CD4-positive, alpha-beta memory T cell (primary cell): ENCODE measurements at regions of chr17 and their contacts with region 1.

Region 1: DNA sequence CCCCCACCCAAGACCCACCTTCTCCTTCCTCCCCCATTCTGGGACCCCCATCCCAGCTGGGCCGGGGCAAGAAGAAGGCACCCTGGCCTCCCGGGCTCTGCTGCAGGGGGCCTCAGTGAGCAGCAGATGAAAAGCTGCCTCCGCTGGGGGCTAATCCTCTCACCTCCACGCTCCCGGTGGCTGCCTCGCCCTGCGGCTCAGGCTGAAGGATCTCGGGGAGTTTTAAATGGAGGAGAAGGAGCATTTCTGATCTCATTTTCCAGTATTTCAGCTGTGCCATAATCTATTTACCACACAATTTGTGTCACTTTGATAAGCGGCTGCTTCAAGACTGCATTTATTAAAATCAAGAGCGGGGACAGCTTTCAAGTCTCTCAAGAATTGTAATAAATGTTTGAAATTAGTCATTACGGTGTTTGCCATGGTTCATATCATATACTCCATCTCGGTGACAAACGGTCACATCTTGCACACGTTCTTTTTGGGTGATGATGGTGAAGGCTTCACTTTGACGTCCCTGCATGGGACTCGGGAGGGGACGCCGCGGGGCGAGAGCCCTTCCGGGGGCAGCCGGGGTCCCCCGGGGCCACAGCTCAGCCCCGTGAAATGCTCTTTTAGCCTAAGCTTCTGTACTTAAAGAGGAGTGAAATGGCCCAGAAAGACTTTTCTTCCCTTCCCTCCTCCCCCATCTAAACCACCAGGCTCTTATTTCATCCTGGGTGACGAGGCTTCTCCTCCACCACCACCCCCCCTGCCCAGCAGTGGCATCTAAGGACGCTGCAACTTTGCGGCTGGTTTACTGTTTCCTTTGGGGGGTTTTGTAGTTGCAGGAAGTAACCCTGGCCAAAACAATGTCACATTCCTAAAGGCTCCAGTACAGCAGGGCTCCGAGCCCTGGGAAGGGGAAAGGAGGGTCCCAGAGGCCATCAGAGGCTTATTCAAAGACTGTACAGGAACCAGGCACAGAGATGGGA is 313.1 kb upstream of the TNRC6C start:
- DNase-seq: peak; percentile 52 to 81 (median 60)
- H3K4me3 ChIP-seq: peak overlapping the region; percentile 55 to 57
- H3K4me3 Mint-ChIP-seq: peak overlapping the region; percentile 80 to 95 (median 86)
- H3K27ac ChIP-seq: peak overlapping the region; percentile 16
- H3K27ac Mint-ChIP-seq: peak overlapping the region; percentile 77 to 94 (median 88)
- H3K4me1 ChIP-seq: peaks cover 20% of the 10 kb centered on the region
- H3K4me1 Mint-ChIP-seq: peaks cover 9 to 30% (median 22%) of the 10 kb centered on the region in 4 donors
- H3K27me3 ChIP-seq: no peaks in the 10 kb centered on the region
- H3K27me3 Mint-ChIP-seq: no peaks in the 10 kb centered on the region

Region 2: DNA sequence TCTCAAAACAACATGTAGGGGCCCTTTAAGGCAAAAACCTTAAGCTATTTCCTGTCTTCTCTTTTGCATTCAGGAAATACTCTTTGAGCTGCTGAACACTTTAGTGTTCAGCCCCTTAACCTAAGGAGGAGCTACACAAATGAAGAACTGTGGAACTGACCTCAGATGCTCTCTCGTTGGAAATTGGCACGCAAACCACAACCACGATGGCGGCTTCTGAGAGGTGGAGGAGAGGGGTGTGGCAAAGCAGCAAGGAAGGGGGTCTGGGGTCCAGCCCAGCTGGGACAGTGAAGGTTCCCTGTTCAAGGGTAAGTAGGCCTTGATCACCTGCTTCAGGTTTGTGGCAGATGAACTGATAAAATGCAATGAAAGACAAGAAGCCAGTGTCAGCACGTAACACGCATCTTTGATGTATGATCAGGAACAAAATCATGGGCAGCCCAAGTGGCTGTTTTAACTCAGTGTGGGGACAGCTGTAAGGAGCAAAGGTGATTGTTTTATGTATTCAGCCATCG is 21.6 kb after region 1 on chr17:
- CTCF ChIA-PET with region 1: interaction called, 7 read pairs
- POLR2A ChIA-PET with region 1: interaction called, 33 read pairs
- intact Hi-C with region 1: loop called (anchors 1 kb)
- DNase-seq: peak; percentile 83 to 89 (median 84)
- H3K4me3 ChIP-seq: peak overlapping the region; percentile 49 to 53
- H3K4me3 Mint-ChIP-seq: peak overlapping the region; percentile 81 to 98 (median 90)
- H3K27ac ChIP-seq: peak overlapping the region; percentile 54
- H3K27ac Mint-ChIP-seq: peak overlapping the region; percentile 82 to 98 (median 97)
- H3K4me1 ChIP-seq: peaks cover 35% of the 10 kb centered on the region
- H3K4me1 Mint-ChIP-seq: peaks cover 44 to 64% (median 50%) of the 10 kb centered on the region in 4 donors
- H3K27me3 ChIP-seq: no peaks in the 10 kb centered on the region
- H3K27me3 Mint-ChIP-seq: no peaks in the 10 kb centered on the region

Region 3: GRCh38 chr17:77690271-77691161 is 45.2 kb after region 1 on chr17:
- CTCF ChIA-PET with region 1: interaction called, 5 read pairs
- POLR2A ChIA-PET with region 1: no interaction called
- intact Hi-C with region 1: loop called (anchors 10 kb)
- DNase-seq: peak in 3 of 5 donors; percentile 16 to 18 (median 18)
- H3K4me3 ChIP-seq: peak overlapping the region in 1 of 2 donors; percentile 24
- H3K4me3 Mint-ChIP-seq: peak overlapping the region; percentile 48 to 78 (median 68)
- H3K27ac ChIP-seq: no peak overlapping the region
- H3K27ac Mint-ChIP-seq: peak overlapping the region in 3 of 7 donors; percentile 12 to 59 (median 29)
- H3K4me1 ChIP-seq: peaks cover 30% of the 10 kb centered on the region
- H3K4me1 Mint-ChIP-seq: peaks cover 20 to 47% (median 35%) of the 10 kb centered on the region in 4 donors
- H3K27me3 ChIP-seq: no peaks in the 10 kb centered on the region
- H3K27me3 Mint-ChIP-seq: peaks cover 7 to 9% of the 10 kb centered on the region in 2 donors

Region 4: GRCh38 chr17:77741109-77741508 is 95.8 kb after region 1 on chr17:
- CTCF ChIA-PET with region 1: interaction called, 8 read pairs
- POLR2A ChIA-PET with region 1: interaction called, 4 read pairs
- intact Hi-C with region 1: loop called (anchors 1 kb)
- DNase-seq: peak in 3 of 5 donors; percentile 6 to 41 (median 30)
- H3K4me3 ChIP-seq: no peak overlapping the region
- H3K4me3 Mint-ChIP-seq: no peak overlapping the region
- H3K27ac ChIP-seq: no peak overlapping the region
- H3K27ac Mint-ChIP-seq: no peak overlapping the region
- H3K4me1 ChIP-seq: no peaks in the 10 kb centered on the region
- H3K4me1 Mint-ChIP-seq: no peaks in the 10 kb centered on the region
- H3K27me3 ChIP-seq: no peaks in the 10 kb centered on the region
- H3K27me3 Mint-ChIP-seq: peaks cover 2 to 5% of the 10 kb centered on the region in 2 donors

Region 5: GRCh38 chr17:78013683-78014467 is 368.5 kb after region 1 on chr17:
- CTCF ChIA-PET with region 1: interaction called, 17 read pairs
- POLR2A ChIA-PET with region 1: interaction called, 9 read pairs
- intact Hi-C with region 1: loop called (anchors 1 kb)
- DNase-seq: peak; percentile 54 to 62 (median 60)
- H3K4me3 ChIP-seq: no peak overlapping the region
- H3K4me3 Mint-ChIP-seq: no peak overlapping the region
- H3K27ac ChIP-seq: no peak overlapping the region
- H3K27ac Mint-ChIP-seq: peak overlapping the region; percentile 3 to 65 (median 30)
- H3K4me1 ChIP-seq: peaks cover 11% of the 10 kb centered on the region
- H3K4me1 Mint-ChIP-seq: peaks cover 21 to 44% (median 29%) of the 10 kb centered on the region in 4 donors
- H3K27me3 ChIP-seq: no peaks in the 10 kb centered on the region
- H3K27me3 Mint-ChIP-seq: no peaks in the 10 kb centered on the region